Activated B cell treated with CpG ODN at 0.5 μM for 24 hours (primary cell): ENCODE measurements at regions of chr19 and their contacts with region 1.

Region 1: DNA sequence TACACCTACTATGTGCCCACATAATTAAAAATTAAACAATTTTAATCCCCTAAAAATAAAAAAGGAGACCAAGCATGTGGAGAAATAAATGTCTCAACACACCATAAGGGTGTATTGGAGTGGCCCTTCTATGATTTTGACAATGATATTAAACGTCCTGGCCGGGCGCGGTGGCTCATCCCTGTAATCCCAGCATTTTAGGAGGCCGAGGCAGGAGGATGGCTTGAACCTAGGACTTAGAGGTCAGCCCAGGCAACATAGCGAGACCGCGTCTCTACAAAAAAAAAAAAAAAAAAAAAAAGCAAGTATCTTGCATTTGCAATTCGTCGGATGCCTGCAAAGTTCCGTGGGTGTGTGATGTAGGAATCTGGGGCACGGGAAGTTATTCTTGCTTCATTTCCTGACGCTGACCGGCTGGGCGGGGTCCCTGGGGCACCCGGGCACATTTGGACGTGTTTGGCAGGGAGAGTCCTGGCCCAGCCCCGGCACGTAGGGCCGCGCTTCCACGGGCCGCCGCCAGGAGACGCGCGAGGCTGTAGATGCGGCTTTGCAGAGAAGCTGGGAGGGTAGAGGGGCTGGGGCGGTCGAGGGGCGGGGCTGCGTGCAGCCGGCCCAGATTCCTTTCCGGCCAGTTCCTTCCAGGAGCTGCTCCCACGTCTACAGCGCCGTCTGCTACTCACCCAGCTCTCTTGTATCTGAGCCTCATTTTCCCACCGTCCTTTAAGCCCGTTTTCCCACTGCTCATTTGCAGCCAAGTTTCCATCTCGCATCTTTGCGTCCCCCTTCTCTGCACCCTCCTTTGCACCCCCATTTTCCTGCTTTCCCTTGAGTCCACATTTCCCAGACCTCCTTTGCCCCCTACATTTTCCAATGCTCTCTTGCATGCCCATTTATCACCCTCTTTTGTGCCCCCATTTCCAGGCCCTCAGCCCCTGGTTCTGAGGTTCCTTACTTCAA is 2.2 kb upstream of the TSPAN16 start:
- DNase-seq: peak; percentile 84
- ATAC-seq: peak; percentile 100
- H3K4me3 Mint-ChIP-seq: no peak overlapping the region
- H3K27ac Mint-ChIP-seq: no peak overlapping the region
- H3K4me1 Mint-ChIP-seq: peaks cover 6% of the 10 kb centered on the region
- H3K27me3 Mint-ChIP-seq: peaks cover 5% of the 10 kb centered on the region
- CTCF ChIP-seq: peak; percentile 80

Region 2: DNA sequence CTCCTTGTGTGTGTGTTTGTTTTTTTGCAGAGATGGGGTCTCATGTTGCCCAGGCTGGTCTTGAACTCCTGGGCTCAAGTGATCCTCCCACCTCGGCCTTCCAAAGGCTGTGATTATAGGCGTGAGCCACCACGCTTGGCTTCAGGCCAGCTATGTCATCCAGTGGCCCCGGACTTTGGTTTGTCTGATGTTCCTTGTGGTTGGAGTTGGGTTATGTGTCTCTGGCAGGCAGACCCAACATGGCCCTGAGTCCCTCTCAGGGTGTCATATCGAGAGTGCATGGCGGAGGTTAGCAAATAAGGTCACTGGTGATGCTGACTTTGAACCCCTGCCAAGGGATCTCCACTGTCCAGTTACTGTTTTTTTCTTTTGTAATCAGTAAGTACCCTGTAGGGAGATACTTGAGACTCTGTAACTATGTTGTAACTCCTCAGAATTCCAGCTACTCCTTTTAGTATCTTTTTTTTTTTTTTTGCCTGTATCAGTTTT is 295.6 kb before region 1 on chr19:
- CTCF ChIA-PET with region 1: no interaction called
- POLR2A ChIA-PET with region 1: no interaction called
- intact Hi-C with region 1: no loop called
- DNase-seq: no peak
- ATAC-seq: no peak
- H3K4me3 Mint-ChIP-seq: no peak overlapping the region
- H3K27ac Mint-ChIP-seq: no peak overlapping the region
- H3K4me1 Mint-ChIP-seq: no peaks in the 10 kb centered on the region
- H3K27me3 Mint-ChIP-seq: no peaks in the 10 kb centered on the region
- CTCF ChIP-seq: no peak

Region 3: GRCh38 chr19:11346092-11346940 is 52.6 kb after region 1 on chr19 and contains the starts of genes CCDC159 and TMEM205:
- CTCF ChIA-PET with region 1: no interaction called
- POLR2A ChIA-PET with region 1: no interaction called
- intact Hi-C with region 1: loop called (anchors 5 kb)
- DNase-seq: peak; percentile 93
- ATAC-seq: peak; percentile 95
- H3K4me3 Mint-ChIP-seq: peak within 1 kb of the TSS; percentile 98
- H3K27ac Mint-ChIP-seq: peak within 1 kb of the TSS; percentile 93
- H3K4me1 Mint-ChIP-seq: peaks cover 30% of the 10 kb centered on the region
- H3K27me3 Mint-ChIP-seq: no peaks in the 10 kb centered on the region
- CTCF ChIP-seq: no peak
- total RNA-seq, gene CCDC159: 27.6 and 32.1 TPM in 2 replicates
- total RNA-seq, gene TMEM205: 61.8 and 68.1 TPM in 2 replicates

Region 4: DNA sequence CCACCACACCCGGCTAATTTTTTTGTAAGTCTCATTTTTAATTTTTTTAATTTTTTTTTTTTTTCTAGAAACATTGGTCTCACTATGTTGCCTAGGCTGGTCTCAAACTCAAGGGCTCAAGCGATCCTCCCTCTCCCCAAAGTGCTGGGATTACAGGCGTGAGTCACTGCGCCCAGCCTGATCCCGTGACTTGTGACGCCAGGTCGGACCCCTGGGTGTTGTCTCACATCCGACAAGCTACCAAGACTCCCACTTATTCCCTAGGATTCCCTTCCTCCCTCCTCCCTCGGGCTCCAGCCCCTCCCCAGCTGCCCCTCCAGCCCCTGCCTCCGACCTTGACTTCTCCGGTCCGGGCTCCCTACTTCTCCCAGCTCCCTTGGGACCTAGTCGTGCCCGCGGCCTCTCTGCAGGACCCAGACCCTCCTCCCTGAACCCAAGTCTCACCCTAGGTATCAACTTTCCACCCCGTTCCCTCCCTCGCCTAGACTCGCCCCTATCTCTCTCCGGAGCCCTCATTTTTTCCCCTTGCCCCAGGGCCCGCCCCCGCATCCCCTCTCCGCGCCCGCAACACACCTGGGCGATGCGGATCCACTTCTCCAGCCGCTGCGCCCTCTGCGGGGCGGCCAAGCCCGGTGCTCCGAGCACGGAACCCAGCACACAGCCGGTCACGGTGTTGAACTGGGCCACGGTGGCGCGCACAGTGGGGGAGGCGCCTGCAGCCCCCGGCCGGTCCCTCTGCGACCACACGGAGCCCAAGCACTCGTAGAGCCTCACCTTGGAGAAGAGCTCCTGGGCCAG is 112.3 kb after region 1 on chr19:
- CTCF ChIA-PET with region 1: interaction called, 3 read pairs
- POLR2A ChIA-PET with region 1: no interaction called
- intact Hi-C with region 1: loop called (anchors 1 kb)
- DNase-seq: peak; percentile 32
- ATAC-seq: peak; percentile 56
- H3K4me3 Mint-ChIP-seq: no peak overlapping the region
- H3K27ac Mint-ChIP-seq: no peak overlapping the region
- H3K4me1 Mint-ChIP-seq: peaks cover 5% of the 10 kb centered on the region
- H3K27me3 Mint-ChIP-seq: peaks cover 7% of the 10 kb centered on the region
- CTCF ChIP-seq: no peak

Region 5: GRCh38 chr19:11422163-11423021 is 128.7 kb after region 1 on chr19:
- CTCF ChIA-PET with region 1: no interaction called
- POLR2A ChIA-PET with region 1: no interaction called
- intact Hi-C with region 1: no loop called
- DNase-seq: peak; percentile 89
- ATAC-seq: peak; percentile 84
- H3K4me3 Mint-ChIP-seq: peak overlapping the region; percentile 81
- H3K27ac Mint-ChIP-seq: peak overlapping the region; percentile 66
- H3K4me1 Mint-ChIP-seq: peaks cover 54% of the 10 kb centered on the region
- H3K27me3 Mint-ChIP-seq: peaks cover 18% of the 10 kb centered on the region
- CTCF ChIP-seq: no peak

Region 6: DNA sequence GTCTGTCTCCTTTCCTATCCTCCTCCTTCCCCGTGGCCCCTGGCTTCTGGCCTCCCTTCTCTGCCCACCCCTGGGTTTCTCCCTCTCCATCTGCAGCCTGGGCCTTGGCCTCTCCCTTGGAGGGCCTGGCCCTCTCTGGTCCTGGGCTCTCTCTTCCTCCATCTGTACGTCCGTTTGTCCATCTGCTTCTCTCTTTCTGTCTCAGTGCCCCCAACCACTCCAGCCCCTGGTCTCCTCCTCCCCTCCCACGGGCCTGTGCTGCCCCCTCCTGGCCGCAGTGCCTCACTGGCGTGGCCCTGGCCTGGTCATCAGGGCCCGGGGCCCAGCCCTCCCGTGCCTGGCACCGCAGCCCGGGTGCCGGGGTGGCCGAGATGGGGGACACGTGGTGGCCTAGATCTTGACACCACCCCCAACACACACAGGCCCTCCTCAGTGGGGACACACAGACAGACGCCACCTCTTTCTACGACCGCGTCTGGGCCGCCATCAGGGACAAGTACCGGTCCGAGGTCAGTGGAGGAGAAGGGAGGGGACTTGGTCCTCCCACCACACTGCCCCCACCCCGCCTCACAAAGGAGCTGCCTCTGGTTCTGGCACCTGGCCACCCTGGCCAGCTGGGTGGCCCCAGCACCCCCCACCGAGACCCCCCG is 153.1 kb after region 1 on chr19:
- CTCF ChIA-PET with region 1: interaction called, 4 read pairs
- POLR2A ChIA-PET with region 1: no interaction called
- intact Hi-C with region 1: loop called (anchors 1 kb)
- DNase-seq: peak; percentile 61
- ATAC-seq: peak; percentile 81
- H3K4me3 Mint-ChIP-seq: no peak overlapping the region
- H3K27ac Mint-ChIP-seq: no peak overlapping the region
- H3K4me1 Mint-ChIP-seq: peaks cover 3% of the 10 kb centered on the region
- H3K27me3 Mint-ChIP-seq: no peaks in the 10 kb centered on the region
- CTCF ChIP-seq: no peak

Region 7: GRCh38 chr19:11482384-11483050 is 188.8 kb after region 1 on chr19:
- CTCF ChIA-PET with region 1: interaction called, 13 read pairs
- POLR2A ChIA-PET with region 1: interaction called, 3 read pairs
- intact Hi-C with region 1: loop called (anchors 1 kb)
- DNase-seq: peak; percentile 85
- ATAC-seq: peak; percentile 72
- H3K4me3 Mint-ChIP-seq: peak overlapping the region; percentile 74
- H3K27ac Mint-ChIP-seq: peak overlapping the region; percentile 41
- H3K4me1 Mint-ChIP-seq: peaks cover 30% of the 10 kb centered on the region
- H3K27me3 Mint-ChIP-seq: peaks cover 23% of the 10 kb centered on the region
- CTCF ChIP-seq: no peak